Gastrocnemius medialis (tissue), 4 donors: ENCODE measurements at regions of chr17 and their contacts with region 1.

Region 1: GRCh38 chr17:70271666-70272065 is 102.3 kb downstream of the KCNJ2 start:
- DNase-seq: peak in 1 of 2 donors; percentile 14
- ATAC-seq: peak in 1 of 2 donors; percentile 52
- H3K4me3 ChIP-seq: no peak overlapping the region
- H3K27ac ChIP-seq: peak overlapping the region in 1 of 4 donors; percentile 7
- H3K4me1 ChIP-seq: peaks cover 3 to 17% of the 10 kb centered on the region in 2 donors
- H3K27me3 ChIP-seq: no peaks in the 10 kb centered on the region
- CTCF ChIP-seq: no peak
- POLR2A ChIP-seq: no peak

Region 2: GRCh38 chr17:70292366-70292765 is 20.7 kb after region 1 on chr17:
- in situ Hi-C with region 1: no loop called
- intact Hi-C with region 1: loop called (anchors 2 kb)
- DNase-seq: no peak
- ATAC-seq: no peak
- H3K4me3 ChIP-seq: no peak overlapping the region
- H3K27ac ChIP-seq: no peak overlapping the region
- H3K4me1 ChIP-seq: peaks cover 14 to 24% of the 10 kb centered on the region in 2 donors
- H3K27me3 ChIP-seq: no peaks in the 10 kb centered on the region
- CTCF ChIP-seq: no peak
- POLR2A ChIP-seq: no peak

Region 3: GRCh38 chr17:70446446-70446845 is 174.8 kb after region 1 on chr17:
- in situ Hi-C with region 1: no loop called
- intact Hi-C with region 1: no loop called
- DNase-seq: no peak
- ATAC-seq: no peak
- H3K4me3 ChIP-seq: no peak overlapping the region
- H3K27ac ChIP-seq: no peak overlapping the region
- H3K4me1 ChIP-seq: no peaks in the 10 kb centered on the region
- H3K27me3 ChIP-seq: no peaks in the 10 kb centered on the region
- CTCF ChIP-seq: no peak
- POLR2A ChIP-seq: no peak

Region 4: GRCh38 chr17:70687421-70687820 is 415.8 kb after region 1 on chr17:
- in situ Hi-C with region 1: no loop called
- intact Hi-C with region 1: no loop called
- DNase-seq: no peak
- ATAC-seq: no peak
- H3K4me3 ChIP-seq: no peak overlapping the region
- H3K27ac ChIP-seq: no peak overlapping the region
- H3K4me1 ChIP-seq: no peaks in the 10 kb centered on the region
- H3K27me3 ChIP-seq: no peaks in the 10 kb centered on the region
- CTCF ChIP-seq: no peak
- POLR2A ChIP-seq: no peak